Activated naive CD4-positive, alpha-beta T cell treated with anti-CD3 and anti-CD28 coated beads for 36 hours (primary cell): ENCODE measurements at regions of chr4 and their contacts with region 1.

Region 1: DNA sequence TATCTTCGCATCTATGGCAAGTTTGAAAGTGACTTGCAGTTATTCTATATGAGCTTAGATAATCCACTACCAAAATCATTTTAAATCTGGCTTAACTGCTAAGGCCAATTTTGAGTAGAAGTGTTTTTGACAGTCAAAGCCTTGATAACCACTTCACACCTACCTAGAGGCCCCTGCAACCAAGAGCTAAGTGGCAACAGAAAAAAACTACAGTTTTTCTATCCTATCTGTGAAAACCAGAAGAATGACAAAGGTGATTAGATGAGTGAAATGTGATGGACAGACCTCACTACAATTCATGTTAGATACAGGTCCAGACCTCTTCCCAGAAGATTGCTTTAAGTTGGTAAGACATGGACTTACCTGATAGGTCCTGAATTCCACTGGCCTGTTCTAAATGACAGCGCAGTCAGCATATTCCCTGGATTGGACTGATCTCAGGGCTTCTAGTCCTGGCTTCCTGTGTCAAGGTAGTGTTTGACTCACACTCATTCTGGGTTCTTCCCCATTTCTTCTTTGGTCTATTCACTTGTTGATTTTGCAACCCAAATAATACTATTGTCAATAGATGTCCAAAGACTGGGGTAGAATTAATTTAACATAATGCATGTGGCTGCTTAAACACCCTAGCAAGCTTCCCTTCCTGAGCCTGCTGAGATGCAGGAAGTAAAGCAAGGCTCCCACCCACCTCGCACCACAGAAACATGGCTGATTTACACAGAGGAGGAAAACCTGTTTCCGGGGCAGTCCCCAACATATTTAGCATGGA is 65.1 kb downstream of the PPP3CA start:
- DNase-seq: peak; percentile 72
- H3K4me3 Mint-ChIP-seq: no peak overlapping the region
- H3K27ac Mint-ChIP-seq: no peak overlapping the region
- H3K4me1 Mint-ChIP-seq: peaks cover 42% of the 10 kb centered on the region
- H3K27me3 Mint-ChIP-seq: no peaks in the 10 kb centered on the region

Region 2: DNA sequence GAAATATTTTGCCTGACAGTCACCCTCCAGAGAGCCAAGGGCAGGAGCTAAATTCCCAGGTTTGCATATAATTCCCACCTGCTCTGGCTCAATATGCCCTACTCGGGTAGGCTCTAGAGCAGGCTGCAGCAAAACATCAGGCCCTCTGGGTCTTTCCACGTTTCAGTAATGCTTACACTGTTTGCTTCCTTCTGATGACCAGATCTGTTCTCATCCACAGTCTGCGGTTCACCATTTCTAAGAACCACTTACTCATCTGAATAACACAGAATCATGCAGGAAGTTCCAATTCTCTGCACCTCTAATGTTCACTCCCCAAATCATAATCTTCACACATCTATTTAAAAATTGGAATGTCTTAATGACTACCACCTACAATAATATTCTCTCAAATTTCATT is 76.3 kb before region 1 on chr4:
- CTCF ChIA-PET with region 1: no interaction called
- intact Hi-C with region 1: loop called (anchors 2 kb)
- DNase-seq: peak; percentile 60
- H3K4me3 Mint-ChIP-seq: no peak overlapping the region
- H3K27ac Mint-ChIP-seq: no peak overlapping the region
- H3K4me1 Mint-ChIP-seq: peaks cover 24% of the 10 kb centered on the region
- H3K27me3 Mint-ChIP-seq: no peaks in the 10 kb centered on the region

Region 3: DNA sequence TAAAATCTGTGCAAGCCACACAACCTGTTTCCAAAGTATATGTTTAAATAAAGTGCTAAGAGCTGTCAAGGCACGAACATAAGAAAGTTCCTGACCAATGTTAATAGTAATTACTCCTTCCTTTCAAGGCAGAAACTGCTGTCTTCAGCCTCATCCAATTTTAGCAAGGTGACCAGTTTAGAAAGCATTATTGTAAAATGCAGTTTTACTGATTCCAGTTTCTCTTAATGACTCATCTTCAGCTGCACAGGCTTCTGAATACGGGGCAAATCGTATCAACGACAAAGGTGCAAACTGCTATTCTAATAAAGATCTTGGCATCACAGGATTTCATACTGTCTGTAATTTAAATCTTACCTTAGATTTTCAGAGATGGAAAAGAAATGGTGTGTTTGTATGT is 22.4 kb before region 1 on chr4:
- CTCF ChIA-PET with region 1: no interaction called
- intact Hi-C with region 1: loop called (anchors 1 kb)
- DNase-seq: no peak
- H3K4me3 Mint-ChIP-seq: no peak overlapping the region
- H3K27ac Mint-ChIP-seq: no peak overlapping the region
- H3K4me1 Mint-ChIP-seq: peaks cover 32% of the 10 kb centered on the region
- H3K27me3 Mint-ChIP-seq: no peaks in the 10 kb centered on the region